ENCODE measurements at regions of chr1 and their contacts with region 1.

Region 1: GRCh38 chr1:205485338-205486228 is 18.9 kb upstream of the CDK18 start:
- DNase-seq: peak; percentile 85
- ATAC-seq: peak; percentile 78
- H3K4me3 ChIP-seq: no peak overlapping the region
- H3K4me3 Mint-ChIP-seq: no peak overlapping the region
- H3K27ac ChIP-seq: no peak overlapping the region
- H3K27ac Mint-ChIP-seq: peak overlapping the region; percentile 17
- H3K4me1 ChIP-seq: peaks cover 22 to 25% of the 10 kb centered on the region in 2 donors
- H3K4me1 Mint-ChIP-seq: peaks cover 28% of the 10 kb centered on the region
- H3K27me3 ChIP-seq: peaks cover 0 to 40% (median 5%) of the 10 kb centered on the region in 4 experiments
- H3K27me3 Mint-ChIP-seq: peaks cover 47% of the 10 kb centered on the region
- CTCF ChIP-seq: peak; percentile 94

Region 2: GRCh38 chr1:205273551-205273982 is 212.0 kb before region 1 on chr1:
- CTCF ChIA-PET with region 1: interaction called, 162 read pairs
- POLR2A ChIA-PET with region 1: no interaction called
- intact Hi-C with region 1: loop called (anchors 1 kb)
- DNase-seq: peak; percentile 90
- ATAC-seq: peak; percentile 83
- H3K4me3 ChIP-seq: peak overlapping the region in 3 of 5 experiments; percentile 5 to 27 (median 23)
- H3K4me3 Mint-ChIP-seq: peak overlapping the region; percentile 78
- H3K27ac ChIP-seq: peak overlapping the region in 1 of 2 donors; percentile 37
- H3K27ac Mint-ChIP-seq: peak overlapping the region; percentile 94
- H3K4me1 ChIP-seq: peaks cover 51 to 54% of the 10 kb centered on the region in 2 donors
- H3K4me1 Mint-ChIP-seq: peaks cover 46% of the 10 kb centered on the region
- H3K27me3 ChIP-seq: no peaks in the 10 kb centered on the region
- H3K27me3 Mint-ChIP-seq: no peaks in the 10 kb centered on the region
- CTCF ChIP-seq: peak; percentile 97

Region 3: DNA sequence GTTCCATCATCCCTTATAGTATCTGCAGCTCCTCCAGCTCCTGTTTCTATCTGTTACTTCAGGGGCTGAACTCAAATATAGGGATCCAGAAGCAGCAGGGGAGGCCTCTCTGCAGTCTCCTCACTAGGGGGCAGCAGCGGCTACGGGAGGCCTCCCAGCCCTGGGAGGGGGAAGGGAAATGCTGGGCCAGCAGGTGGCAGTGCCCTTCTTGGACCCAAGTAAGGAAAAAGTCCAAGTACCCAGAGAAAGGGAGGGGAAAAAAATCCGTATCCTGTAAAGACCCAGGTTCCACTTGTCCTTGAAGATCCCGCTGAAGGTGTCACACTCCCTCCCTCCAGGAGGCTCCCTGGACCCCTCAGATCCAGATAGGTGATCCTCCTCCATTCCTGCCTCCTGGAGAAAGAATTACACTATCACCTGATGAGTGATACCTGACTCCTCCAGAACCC is 149.9 kb before region 1 on chr1:
- CTCF ChIA-PET with region 1: interaction called, 131 read pairs
- POLR2A ChIA-PET with region 1: no interaction called
- intact Hi-C with region 1: loop called (anchors 1 kb)
- DNase-seq: peak; percentile 87
- ATAC-seq: peak; percentile 96
- H3K4me3 ChIP-seq: no peak overlapping the region
- H3K4me3 Mint-ChIP-seq: no peak overlapping the region
- H3K27ac ChIP-seq: no peak overlapping the region
- H3K27ac Mint-ChIP-seq: no peak overlapping the region
- H3K4me1 ChIP-seq: peaks cover 0 to 4% of the 10 kb centered on the region in 2 donors
- H3K4me1 Mint-ChIP-seq: peaks cover 9% of the 10 kb centered on the region
- H3K27me3 ChIP-seq: no peaks in the 10 kb centered on the region
- H3K27me3 Mint-ChIP-seq: no peaks in the 10 kb centered on the region
- CTCF ChIP-seq: peak; percentile 91

Region 4: DNA sequence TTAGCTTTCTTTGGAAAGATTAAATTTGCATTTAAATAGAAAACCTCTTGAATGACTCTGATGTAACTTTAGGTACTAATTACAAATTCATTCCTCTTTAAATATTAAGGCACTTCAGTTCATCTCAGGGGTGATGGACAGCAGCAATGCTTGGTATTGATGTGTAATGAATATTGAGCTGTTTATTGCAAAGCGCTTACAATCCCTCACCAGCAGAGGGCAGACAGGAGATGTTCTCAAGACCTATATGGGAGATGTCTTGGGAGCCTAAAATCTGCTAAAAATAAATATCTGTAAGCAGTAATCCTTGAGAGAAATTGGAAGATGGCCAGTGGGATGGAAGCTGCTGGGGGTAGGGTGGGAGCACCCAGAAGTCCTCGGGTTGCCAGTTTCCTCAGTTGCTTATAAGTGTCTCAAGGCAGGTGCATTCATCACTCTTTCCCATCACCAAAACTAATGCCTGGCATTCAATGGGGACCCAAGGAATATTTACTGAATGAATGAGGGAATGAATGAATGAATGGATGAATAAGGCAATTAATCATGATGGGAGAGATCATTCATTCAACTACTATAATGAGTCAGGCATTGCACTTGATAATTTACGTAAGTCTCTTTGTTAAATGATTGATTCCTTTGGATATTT is 131.2 kb before region 1 on chr1:
- CTCF ChIA-PET with region 1: interaction called, 115 read pairs
- POLR2A ChIA-PET with region 1: interaction called, 5 read pairs
- intact Hi-C with region 1: loop called (anchors 1 kb)
- DNase-seq: peak; percentile 78
- ATAC-seq: peak; percentile 58
- H3K4me3 ChIP-seq: no peak overlapping the region
- H3K4me3 Mint-ChIP-seq: no peak overlapping the region
- H3K27ac ChIP-seq: no peak overlapping the region
- H3K27ac Mint-ChIP-seq: no peak overlapping the region
- H3K4me1 ChIP-seq: peaks cover 16 to 20% of the 10 kb centered on the region in 2 donors
- H3K4me1 Mint-ChIP-seq: peaks cover 29% of the 10 kb centered on the region
- H3K27me3 ChIP-seq: peaks cover 0 to 4% (median 0%) of the 10 kb centered on the region in 4 experiments
- H3K27me3 Mint-ChIP-seq: peaks cover 19% of the 10 kb centered on the region
- CTCF ChIP-seq: peak; percentile 95

Region 5: DNA sequence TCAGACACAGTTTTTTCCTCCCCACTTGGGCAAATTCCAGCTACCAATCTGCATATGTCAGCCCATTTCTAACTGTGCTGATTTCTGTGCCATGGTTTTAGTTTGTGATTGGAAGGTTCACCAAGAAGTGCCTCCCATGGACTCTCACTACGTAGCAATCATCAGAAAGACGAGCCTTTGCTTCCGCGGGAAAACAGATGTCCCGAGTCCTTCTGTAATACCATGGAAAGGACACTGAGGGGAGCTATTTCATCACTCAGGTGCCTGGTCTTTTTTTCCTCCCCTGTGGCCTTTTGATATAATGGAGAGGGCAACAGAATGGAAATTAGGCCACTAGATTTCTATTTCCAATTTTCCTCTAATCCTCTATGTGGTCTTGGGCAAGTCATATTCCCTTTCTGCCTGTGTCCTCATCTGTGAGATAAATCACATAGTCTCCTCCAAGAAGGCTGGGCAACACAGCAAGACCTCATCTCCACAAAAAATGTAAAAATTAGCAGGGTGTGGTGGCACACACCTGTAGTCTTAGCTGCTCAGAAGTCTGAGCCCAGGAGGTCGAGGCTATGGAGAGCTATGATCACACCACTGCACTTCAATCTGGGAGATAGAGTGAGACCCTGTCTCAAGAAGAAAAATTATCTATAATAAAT is 88.5 kb before region 1 on chr1:
- CTCF ChIA-PET with region 1: interaction called, 127 read pairs
- POLR2A ChIA-PET with region 1: no interaction called
- intact Hi-C with region 1: loop called (anchors 1 kb)
- DNase-seq: peak; percentile 65
- ATAC-seq: peak; percentile 47
- H3K4me3 ChIP-seq: no peak overlapping the region
- H3K4me3 Mint-ChIP-seq: no peak overlapping the region
- H3K27ac ChIP-seq: no peak overlapping the region
- H3K27ac Mint-ChIP-seq: no peak overlapping the region
- H3K4me1 ChIP-seq: peaks cover 0 to 2% of the 10 kb centered on the region in 2 donors
- H3K4me1 Mint-ChIP-seq: no peaks in the 10 kb centered on the region
- H3K27me3 ChIP-seq: peaks cover 0 to 7% (median 0%) of the 10 kb centered on the region in 4 experiments
- H3K27me3 Mint-ChIP-seq: peaks cover 18% of the 10 kb centered on the region
- CTCF ChIP-seq: peak; percentile 79

Region 6: GRCh38 chr1:205430696-205431305 is 54.8 kb before region 1 on chr1:
- CTCF ChIA-PET with region 1: interaction called, 134 read pairs
- POLR2A ChIA-PET with region 1: no interaction called
- intact Hi-C with region 1: loop called (anchors 1 kb)
- DNase-seq: peak; percentile 88
- ATAC-seq: peak; percentile 91
- H3K4me3 ChIP-seq: peak overlapping the region; percentile 23 to 54 (median 46)
- H3K4me3 Mint-ChIP-seq: peak overlapping the region; percentile 80
- H3K27ac ChIP-seq: peak overlapping the region; percentile 4 to 43
- H3K27ac Mint-ChIP-seq: peak overlapping the region; percentile 70
- H3K4me1 ChIP-seq: peaks cover 25 to 33% of the 10 kb centered on the region in 2 donors
- H3K4me1 Mint-ChIP-seq: peaks cover 39% of the 10 kb centered on the region
- H3K27me3 ChIP-seq: no peaks in the 10 kb centered on the region
- H3K27me3 Mint-ChIP-seq: no peaks in the 10 kb centered on the region
- CTCF ChIP-seq: peak; percentile 70

Region 7: DNA sequence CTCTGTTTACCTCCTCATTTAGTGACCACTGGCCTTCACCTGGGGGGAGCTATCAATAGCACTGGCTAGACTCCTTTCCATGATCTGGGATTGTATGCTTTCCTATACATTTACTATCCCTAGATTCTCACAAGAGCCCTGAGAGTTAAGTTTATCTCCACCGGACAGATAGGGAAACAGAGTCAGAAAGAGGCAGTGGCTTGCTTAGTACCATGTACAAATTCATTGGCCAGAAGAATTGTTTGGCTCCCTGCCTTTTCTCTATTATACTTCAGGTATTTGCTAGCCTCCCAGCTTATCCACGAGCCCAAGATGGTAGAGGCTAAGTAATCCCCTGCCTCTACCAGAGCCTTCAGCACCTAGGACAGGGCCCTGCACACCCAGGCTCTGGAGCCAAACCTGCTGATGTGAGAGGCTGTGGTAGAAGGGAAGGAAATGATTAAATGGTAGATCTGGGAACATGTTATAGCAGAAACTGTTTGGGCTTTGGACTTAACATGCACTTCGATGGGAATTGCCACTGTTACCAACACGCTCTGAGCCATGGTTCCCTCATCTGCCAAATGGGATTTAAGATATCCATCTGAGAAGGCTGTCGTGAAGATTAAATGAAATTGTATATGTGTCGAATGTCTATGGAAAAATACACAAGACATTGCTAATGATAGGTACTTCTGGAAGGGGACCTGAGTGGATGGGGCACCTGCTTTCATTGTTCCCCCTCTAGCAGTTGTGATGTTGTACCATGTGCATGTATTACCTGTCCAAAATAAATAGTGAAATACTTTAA is 26.6 kb before region 1 on chr1:
- CTCF ChIA-PET with region 1: interaction called, 30 read pairs
- POLR2A ChIA-PET with region 1: no interaction called
- intact Hi-C with region 1: no loop called
- DNase-seq: no peak
- ATAC-seq: peak; percentile 53
- H3K4me3 ChIP-seq: no peak overlapping the region
- H3K4me3 Mint-ChIP-seq: no peak overlapping the region
- H3K27ac ChIP-seq: no peak overlapping the region
- H3K27ac Mint-ChIP-seq: no peak overlapping the region
- H3K4me1 ChIP-seq: peaks cover 22 to 28% of the 10 kb centered on the region in 2 donors
- H3K4me1 Mint-ChIP-seq: peaks cover 18% of the 10 kb centered on the region
- H3K27me3 ChIP-seq: peaks cover 0 to 59% (median 38%) of the 10 kb centered on the region in 4 experiments
- H3K27me3 Mint-ChIP-seq: peaks cover 54% of the 10 kb centered on the region
- CTCF ChIP-seq: no peak

Region 8: GRCh38 chr1:205858141-205858961 is 372.8 kb after region 1 on chr1:
- CTCF ChIA-PET with region 1: no interaction called
- POLR2A ChIA-PET with region 1: no interaction called
- intact Hi-C with region 1: no loop called
- DNase-seq: no peak
- ATAC-seq: no peak
- H3K4me3 ChIP-seq: no peak overlapping the region
- H3K4me3 Mint-ChIP-seq: peak overlapping the region; percentile 75
- H3K27ac ChIP-seq: peak overlapping the region; percentile 3 to 47
- H3K27ac Mint-ChIP-seq: peak overlapping the region; percentile 77
- H3K4me1 ChIP-seq: peaks cover 23 to 24% of the 10 kb centered on the region in 2 donors
- H3K4me1 Mint-ChIP-seq: peaks cover 34% of the 10 kb centered on the region
- H3K27me3 ChIP-seq: no peaks in the 10 kb centered on the region
- H3K27me3 Mint-ChIP-seq: no peaks in the 10 kb centered on the region
- CTCF ChIP-seq: no peak

Measured in B cell (primary cell).